Activated T-helper 2 cell treated with anti-CD3 and anti-CD28 coated beads, Interferon-gamma antibody, Interleukin-2, Interleukin-4, amounts not matched to agents 10 μg/mL and 5 μg/mL and 100 μg/mL, durations not matched to agents 14 hours and 24 hours and 36 hours (primary cell): ENCODE measurements at regions of chr19 and their contacts with region 1.

Region 1: DNA sequence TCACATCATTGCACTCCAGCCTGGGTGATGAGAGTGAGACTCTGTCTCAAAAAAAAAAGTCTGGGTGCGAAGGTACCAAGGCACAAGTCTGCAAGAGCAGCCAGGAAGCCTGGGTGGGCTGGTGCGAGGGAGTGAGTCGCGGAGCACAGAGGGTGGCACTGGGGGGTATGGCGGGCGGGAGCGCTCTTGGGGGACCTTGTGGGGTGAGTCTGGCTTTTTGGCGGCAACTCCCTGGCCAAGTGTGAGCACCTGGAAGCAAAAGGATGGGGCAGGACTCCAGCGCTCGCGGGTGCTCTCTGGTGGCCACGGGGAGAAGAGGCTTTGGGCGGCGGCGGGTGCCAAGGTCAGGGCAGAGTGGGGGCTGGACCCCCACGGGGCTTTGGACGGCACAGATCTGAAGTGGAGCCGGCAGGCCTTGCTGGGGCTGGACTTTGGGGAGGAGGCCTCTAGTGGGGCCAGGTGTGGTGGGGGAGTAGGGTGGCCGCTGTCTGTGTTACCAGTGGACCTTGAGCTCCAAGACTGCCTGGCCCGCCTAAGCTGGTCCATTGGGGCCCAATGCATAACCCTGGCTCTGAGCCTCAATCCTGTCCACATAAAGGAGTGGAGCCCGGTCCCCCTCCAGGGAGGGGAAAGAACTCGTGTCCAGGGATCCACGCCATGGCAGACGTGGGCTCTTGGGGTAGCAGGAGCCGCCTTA is 1.6 kb downstream of the P2RY11 start:
- DNase-seq: peak; percentile 57
- H3K4me3 Mint-ChIP-seq: peak overlapping the region; percentile 35
- H3K27ac Mint-ChIP-seq: peak overlapping the region; percentile 80
- H3K4me1 Mint-ChIP-seq: peaks cover 27% of the 10 kb centered on the region
- H3K27me3 Mint-ChIP-seq: no peaks in the 10 kb centered on the region

Region 2: DNA sequence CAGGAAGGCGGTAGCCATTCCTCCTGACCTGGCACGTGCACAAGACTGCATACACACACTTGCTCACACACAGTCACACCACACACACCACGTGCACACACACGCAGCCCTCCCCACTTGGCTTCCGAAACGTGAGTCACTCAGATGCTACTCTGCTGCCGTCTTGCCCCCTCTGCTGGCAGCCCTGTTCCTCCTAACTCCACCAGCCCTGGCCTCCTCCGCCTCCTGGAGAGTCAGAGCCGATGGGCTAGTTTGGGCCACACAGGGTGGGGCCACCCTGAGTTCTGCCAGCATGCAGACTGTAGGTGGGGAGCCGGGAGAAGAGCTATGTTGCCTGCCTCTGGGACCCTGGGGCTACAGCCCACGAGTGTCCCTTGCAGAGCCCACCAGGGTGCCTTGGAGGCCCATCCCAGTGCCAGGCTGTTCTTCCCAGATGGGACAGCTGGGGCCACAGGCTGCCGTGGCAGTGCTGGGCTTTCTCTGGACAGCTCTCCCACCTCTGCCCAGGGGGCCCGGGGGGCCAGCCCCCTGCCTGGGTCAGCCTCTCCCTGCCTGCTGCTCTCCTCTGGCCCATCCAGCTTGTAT is 265.9 kb before region 1 on chr19:
- intact Hi-C with region 1: no loop called
- DNase-seq: no peak
- H3K4me3 Mint-ChIP-seq: no peak overlapping the region
- H3K27ac Mint-ChIP-seq: no peak overlapping the region
- H3K4me1 Mint-ChIP-seq: no peaks in the 10 kb centered on the region
- H3K27me3 Mint-ChIP-seq: no peaks in the 10 kb centered on the region

Region 3: DNA sequence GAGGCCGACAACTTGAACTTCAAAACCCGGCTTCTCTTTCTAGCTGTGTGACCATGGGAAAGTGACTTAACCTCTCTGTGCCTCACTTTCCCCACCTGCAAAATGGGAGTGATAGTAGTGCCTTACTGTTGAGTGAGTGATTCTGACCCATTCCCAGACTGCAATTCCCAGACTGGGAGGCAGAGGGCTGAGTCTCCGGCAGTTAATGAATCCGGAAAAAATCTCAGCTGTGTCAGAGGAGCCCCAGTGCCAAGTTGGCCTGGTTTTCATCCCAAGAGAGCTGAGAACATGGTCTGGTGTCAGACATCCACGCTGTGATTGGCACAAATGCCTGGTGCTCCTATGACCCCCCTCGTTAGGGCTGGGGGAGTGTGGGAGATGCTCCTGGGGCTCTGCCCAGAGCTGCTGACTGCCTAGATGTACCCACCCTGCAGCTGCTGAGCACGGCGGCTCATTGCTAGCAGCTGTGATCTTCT is 227.9 kb before region 1 on chr19:
- intact Hi-C with region 1: no loop called
- DNase-seq: no peak
- H3K4me3 Mint-ChIP-seq: no peak overlapping the region
- H3K27ac Mint-ChIP-seq: no peak overlapping the region
- H3K4me1 Mint-ChIP-seq: no peaks in the 10 kb centered on the region
- H3K27me3 Mint-ChIP-seq: peaks cover 3% of the 10 kb centered on the region

Region 4: DNA sequence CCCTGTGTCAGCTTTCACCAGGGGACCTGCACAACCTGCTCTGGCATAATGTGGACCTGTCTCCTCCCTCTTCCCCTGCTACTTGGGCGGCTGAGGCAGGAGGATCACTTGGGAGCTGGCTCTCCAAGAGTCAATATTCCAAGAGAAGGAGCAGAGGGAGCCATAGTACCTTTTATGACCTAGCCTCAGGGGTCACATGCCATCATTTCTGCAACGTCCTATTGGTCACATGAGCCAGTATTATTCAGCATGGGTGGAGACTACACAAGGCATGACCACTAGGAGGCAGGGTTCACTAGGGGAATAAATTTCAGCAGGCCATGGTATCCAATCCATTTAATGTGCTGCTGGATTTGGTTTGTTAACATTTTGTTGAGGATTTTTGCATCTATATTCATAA is 38.9 kb before region 1 on chr19:
- intact Hi-C with region 1: loop called (anchors 2 kb)
- DNase-seq: no peak
- H3K4me3 Mint-ChIP-seq: no peak overlapping the region
- H3K27ac Mint-ChIP-seq: no peak overlapping the region
- H3K4me1 Mint-ChIP-seq: no peaks in the 10 kb centered on the region
- H3K27me3 Mint-ChIP-seq: peaks cover 7% of the 10 kb centered on the region

Region 5: GRCh38 chr19:10095948-10096621 is 17.0 kb before region 1 on chr19:
- intact Hi-C with region 1: loop called (anchors 2 kb)
- DNase-seq: peak; percentile 88
- H3K4me3 Mint-ChIP-seq: peak overlapping the region; percentile 49
- H3K27ac Mint-ChIP-seq: peak overlapping the region; percentile 22
- H3K4me1 Mint-ChIP-seq: peaks cover 13% of the 10 kb centered on the region
- H3K27me3 Mint-ChIP-seq: no peaks in the 10 kb centered on the region

Region 6: DNA sequence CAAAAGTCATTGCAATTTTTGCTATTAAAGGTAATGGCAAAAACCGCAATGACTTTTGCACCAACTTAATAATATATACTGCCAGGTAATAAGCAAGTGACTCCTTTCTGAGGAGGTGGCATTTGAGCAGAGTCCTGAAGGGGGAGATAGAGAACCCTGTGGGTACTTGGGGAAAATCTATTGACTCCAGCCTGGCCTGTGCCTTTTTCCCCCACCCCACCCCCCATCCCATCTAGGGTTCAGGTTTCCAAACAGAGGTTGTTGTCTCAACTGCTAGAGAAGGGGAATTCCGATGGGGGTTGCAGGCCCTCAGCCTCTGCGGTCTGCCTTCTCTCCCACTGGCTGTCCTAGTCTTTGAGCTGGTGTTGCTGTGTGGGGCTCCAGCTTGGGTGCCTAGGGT is 106.6 kb after region 1 on chr19:
- intact Hi-C with region 1: no loop called
- DNase-seq: no peak
- H3K4me3 Mint-ChIP-seq: no peak overlapping the region
- H3K27ac Mint-ChIP-seq: no peak overlapping the region
- H3K4me1 Mint-ChIP-seq: peaks cover 2% of the 10 kb centered on the region
- H3K27me3 Mint-ChIP-seq: no peaks in the 10 kb centered on the region